Testis (tissue), 5 donors: ENCODE measurements at regions of chr2 and their contacts with region 1.

Region 1: DNA sequence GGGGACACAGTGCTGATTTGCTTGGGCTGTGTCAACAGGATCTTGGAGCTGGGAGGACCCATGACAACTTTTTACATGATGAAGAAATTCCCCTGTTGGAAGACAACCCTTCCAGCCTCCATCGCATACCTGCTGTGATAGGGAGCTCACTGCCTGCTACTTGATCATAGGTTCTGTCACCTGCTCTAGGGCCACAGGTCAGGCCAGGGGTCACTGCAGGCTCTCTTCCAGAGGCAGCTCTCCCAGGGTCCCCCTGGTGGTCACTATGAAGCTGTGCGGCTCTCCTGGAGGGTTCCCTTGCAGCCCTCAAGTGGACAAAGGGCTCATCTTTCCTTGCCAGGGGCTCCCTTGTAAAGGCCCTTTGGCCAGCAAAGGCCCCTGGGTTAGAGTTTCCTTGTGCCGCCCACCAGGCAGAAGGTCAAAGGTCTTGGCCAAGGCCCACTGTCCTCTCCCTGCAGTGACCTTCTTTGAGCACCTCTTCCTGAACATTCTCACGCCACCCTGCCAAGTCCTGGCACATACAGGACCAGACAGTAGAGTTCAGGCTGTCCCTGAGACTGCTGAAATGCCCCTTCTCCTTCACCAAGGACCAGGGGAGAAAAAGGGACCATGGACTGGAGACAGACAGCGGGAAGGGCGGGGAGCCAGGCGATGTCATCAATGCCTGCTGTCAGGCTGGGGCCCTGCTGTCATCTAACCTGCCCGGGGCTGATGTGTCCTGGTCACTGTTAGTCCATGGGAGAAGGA is 345.1 kb downstream of the DYSF start:
- DNase-seq: peak; percentile 48
- H3K4me3 ChIP-seq: no peak overlapping the region
- H3K27ac ChIP-seq: no peak overlapping the region
- H3K4me1 ChIP-seq: peaks cover 20% of the 10 kb centered on the region
- H3K27me3 ChIP-seq: no peaks in the 10 kb centered on the region
- CTCF ChIP-seq: peak; percentile 38 to 67 (median 51)
- POLR2A ChIP-seq: no peak

Region 2: GRCh38 chr2:71558300-71559051 is 240.0 kb before region 1 on chr2:
- intact Hi-C with region 1: loop called (anchors 10 kb)
- DNase-seq: no peak
- H3K4me3 ChIP-seq: no peak overlapping the region
- H3K27ac ChIP-seq: no peak overlapping the region
- H3K4me1 ChIP-seq: no peaks in the 10 kb centered on the region
- H3K27me3 ChIP-seq: no peaks in the 10 kb centered on the region
- CTCF ChIP-seq: no peak
- POLR2A ChIP-seq: no peak

Region 3: GRCh38 chr2:71609958-71610357 is 188.5 kb before region 1 on chr2:
- intact Hi-C with region 1: loop called (anchors 10 kb)
- DNase-seq: peak; percentile 3
- H3K4me3 ChIP-seq: no peak overlapping the region
- H3K27ac ChIP-seq: no peak overlapping the region
- H3K4me1 ChIP-seq: peaks cover 7% of the 10 kb centered on the region
- H3K27me3 ChIP-seq: no peaks in the 10 kb centered on the region
- CTCF ChIP-seq: peak in 1 of 3 experiments; percentile 26
- POLR2A ChIP-seq: no peak

Region 4: GRCh38 chr2:72150157-72150865 is 351.9 kb after region 1 on chr2:
- intact Hi-C with region 1: loop called (anchors 5 kb)
- DNase-seq: peak; percentile 87
- H3K4me3 ChIP-seq: peak overlapping the region; percentile 34 to 62
- H3K27ac ChIP-seq: no peak overlapping the region
- H3K4me1 ChIP-seq: peaks cover 12% of the 10 kb centered on the region
- H3K27me3 ChIP-seq: no peaks in the 10 kb centered on the region
- CTCF ChIP-seq: peak; percentile 89 to 94 (median 94)
- POLR2A ChIP-seq: no peak